ENCODE measurements at regions of chr1 and their contacts with region 1.

Region 1: GRCh38 chr1:64242895-64243756 is 39.7 kb downstream of the UBE2U start:
- DNase-seq: peak; percentile 72
- ATAC-seq: peak; percentile 57; the same call in 1 of the 2 replicates
- H3K4me3 ChIP-seq: no peak overlapping the region
- H3K27ac ChIP-seq: no peak overlapping the region
- H3K4me1 ChIP-seq: peaks cover 28% of the 10 kb centered on the region
- H3K27me3 ChIP-seq: no peaks in the 10 kb centered on the region
- CTCF ChIP-seq: peak; percentile 81

Region 2: DNA sequence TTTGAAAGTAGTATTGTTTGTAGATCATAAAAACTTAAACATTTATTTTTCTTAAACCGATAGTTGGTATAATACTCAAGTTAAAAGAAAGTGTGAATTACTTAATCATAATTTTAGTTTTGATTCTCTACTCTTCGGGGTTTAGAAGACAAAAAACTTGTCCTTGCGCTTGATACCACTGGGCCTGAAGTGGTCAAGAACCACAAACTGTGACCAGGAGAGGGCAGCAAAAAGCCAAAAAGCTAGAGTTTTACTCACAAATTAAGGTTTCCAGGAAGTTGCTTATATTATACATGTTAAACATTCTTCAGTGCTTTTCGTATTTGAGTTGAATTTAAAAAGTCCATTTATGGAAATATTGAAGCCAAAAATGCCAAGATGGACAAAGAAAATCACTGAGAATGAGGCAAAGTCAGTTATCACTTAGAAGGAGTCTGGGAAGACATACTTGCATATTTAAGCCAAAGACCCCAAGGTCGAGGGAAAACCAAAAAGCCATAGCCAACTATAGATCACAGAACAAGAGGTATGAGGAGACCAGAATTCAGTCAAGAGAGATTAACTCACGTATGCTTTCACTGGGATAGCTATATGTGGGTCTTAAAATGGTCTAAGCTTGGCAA is 685.6 kb before region 1 on chr1:
- CTCF ChIA-PET with region 1: interaction called, 4 read pairs
- POLR2A ChIA-PET with region 1: no interaction called
- intact Hi-C with region 1: loop called (anchors 1 kb)
- DNase-seq: peak; percentile 75
- ATAC-seq: peak; percentile 73
- H3K4me3 ChIP-seq: no peak overlapping the region
- H3K27ac ChIP-seq: no peak overlapping the region
- H3K4me1 ChIP-seq: no peaks in the 10 kb centered on the region
- H3K27me3 ChIP-seq: no peaks in the 10 kb centered on the region
- CTCF ChIP-seq: peak; percentile 87

Region 3: DNA sequence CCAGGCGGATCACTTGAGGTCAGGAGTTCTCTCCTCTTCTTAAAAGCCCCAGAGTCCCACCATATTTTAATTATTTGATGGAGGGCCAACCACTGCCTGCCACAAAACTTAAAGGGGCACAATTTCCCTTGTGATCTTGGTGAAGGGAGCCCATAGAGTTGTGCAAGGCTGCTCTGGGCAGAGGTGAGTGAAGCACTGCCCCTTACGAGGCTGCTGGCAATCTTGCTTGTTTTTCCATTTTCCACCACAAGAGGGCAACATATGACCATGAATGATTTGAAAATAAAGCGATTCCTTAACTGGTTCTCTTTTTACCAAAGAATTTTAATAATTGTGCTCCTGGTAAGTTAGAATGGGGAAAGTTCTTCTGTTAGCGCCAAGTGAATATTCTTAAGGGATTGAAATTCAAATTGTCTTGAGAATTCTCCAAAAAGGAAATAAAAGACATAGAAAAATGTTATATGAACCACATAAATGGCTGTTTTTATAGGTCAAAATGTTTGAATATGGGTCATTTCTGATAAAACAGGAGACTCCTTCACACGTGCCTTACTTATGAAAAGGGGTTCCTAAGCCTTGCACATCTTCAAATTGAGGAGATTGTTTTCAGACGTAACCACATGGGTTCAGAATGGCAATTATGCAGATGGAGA is 627.2 kb before region 1 on chr1:
- CTCF ChIA-PET with region 1: interaction called, 3 read pairs
- POLR2A ChIA-PET with region 1: no interaction called
- intact Hi-C with region 1: loop called (anchors 1 kb)
- DNase-seq: peak; percentile 94
- ATAC-seq: peak; percentile 76
- H3K4me3 ChIP-seq: no peak overlapping the region
- H3K27ac ChIP-seq: no peak overlapping the region
- H3K4me1 ChIP-seq: peaks cover 7% of the 10 kb centered on the region; the same call in 1 of the 2 replicates
- H3K27me3 ChIP-seq: no peaks in the 10 kb centered on the region
- CTCF ChIP-seq: peak; percentile 88

Region 4: DNA sequence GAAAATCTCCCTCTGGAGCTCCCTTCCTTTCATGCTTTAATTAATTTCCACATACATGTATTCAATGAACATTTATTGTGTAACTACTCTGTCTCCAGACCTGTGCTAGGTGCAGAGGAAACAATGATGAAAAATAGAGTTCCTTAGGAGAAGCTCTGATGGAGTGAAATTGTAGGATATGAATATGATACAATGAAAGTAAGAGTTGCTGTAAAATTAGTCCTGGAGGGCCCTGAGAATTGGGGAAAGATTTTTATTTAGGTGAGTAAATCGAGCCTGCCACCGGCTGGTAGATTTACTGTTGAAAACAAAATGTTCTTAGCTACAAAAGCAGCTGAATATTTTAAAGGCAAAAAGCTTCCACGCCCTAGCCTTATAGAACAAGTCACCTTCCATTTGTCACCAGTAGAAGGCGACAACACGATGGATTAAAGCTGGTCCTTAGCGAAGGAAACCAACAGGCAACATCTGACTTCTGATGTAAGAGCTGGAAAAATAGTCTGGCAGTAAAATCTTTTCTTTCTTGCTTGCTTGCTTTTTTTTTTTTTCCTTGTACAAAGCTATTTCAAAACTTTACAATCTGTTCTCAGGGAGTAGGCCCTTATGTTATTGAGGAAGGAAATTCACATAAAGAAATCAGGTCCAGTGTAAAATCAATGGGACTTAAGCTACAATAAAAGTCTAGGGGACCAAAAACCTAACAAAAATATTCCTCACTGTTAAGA is 551.3 kb before region 1 on chr1:
- CTCF ChIA-PET with region 1: interaction called, 15 read pairs
- POLR2A ChIA-PET with region 1: no interaction called
- intact Hi-C with region 1: loop called (anchors 1 kb)
- DNase-seq: peak; percentile 92
- ATAC-seq: peak; percentile 91
- H3K4me3 ChIP-seq: no peak overlapping the region
- H3K27ac ChIP-seq: peak overlapping the region; percentile 60
- H3K4me1 ChIP-seq: peaks cover 10% of the 10 kb centered on the region
- H3K27me3 ChIP-seq: no peaks in the 10 kb centered on the region
- CTCF ChIP-seq: peak; percentile 88

Region 5: GRCh38 chr1:63917571-63918417 is 325.3 kb before region 1 on chr1:
- CTCF ChIA-PET with region 1: no interaction called
- POLR2A ChIA-PET with region 1: no interaction called
- intact Hi-C with region 1: loop called (anchors 5 kb)
- DNase-seq: peak; percentile 29
- ATAC-seq: no peak
- H3K4me3 ChIP-seq: no peak overlapping the region
- H3K27ac ChIP-seq: no peak overlapping the region
- H3K4me1 ChIP-seq: peaks cover 25% of the 10 kb centered on the region
- H3K27me3 ChIP-seq: no peaks in the 10 kb centered on the region
- CTCF ChIP-seq: peak; percentile 53

Region 6: GRCh38 chr1:64136752-64137411 is 106.2 kb before region 1 on chr1:
- CTCF ChIA-PET with region 1: interaction called, 6 read pairs
- POLR2A ChIA-PET with region 1: no interaction called
- intact Hi-C with region 1: loop called (anchors 1 kb)
- DNase-seq: peak; percentile 93
- ATAC-seq: peak; percentile 51
- H3K4me3 ChIP-seq: no peak overlapping the region
- H3K27ac ChIP-seq: no peak overlapping the region
- H3K4me1 ChIP-seq: peaks cover 42% of the 10 kb centered on the region
- H3K27me3 ChIP-seq: no peaks in the 10 kb centered on the region
- CTCF ChIP-seq: peak; percentile 95

Region 7: DNA sequence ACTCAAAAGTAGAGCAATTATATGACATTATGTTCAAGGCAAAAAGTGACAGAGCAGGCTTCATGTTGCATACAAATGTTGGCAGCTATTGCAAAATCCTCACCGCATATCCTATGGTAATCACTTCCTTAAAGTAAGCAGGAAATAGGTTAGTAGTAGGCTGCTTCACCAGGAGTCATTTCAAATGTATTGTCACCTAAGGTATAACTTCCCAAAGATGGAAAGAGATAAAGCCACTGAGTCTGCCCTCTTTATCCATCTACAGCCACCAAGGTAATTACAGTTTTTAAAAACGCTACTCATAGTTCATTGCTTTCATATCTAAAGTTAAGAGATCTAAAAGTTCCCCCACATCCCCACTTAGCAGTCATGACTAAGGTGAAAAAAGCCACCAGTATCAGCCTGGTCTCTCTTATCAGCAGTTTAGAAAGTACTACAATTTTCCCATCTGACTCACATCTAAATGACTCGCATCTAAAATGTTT is 71.3 kb before region 1 on chr1:
- CTCF ChIA-PET with region 1: no interaction called
- POLR2A ChIA-PET with region 1: no interaction called
- intact Hi-C with region 1: loop called (anchors 1 kb)
- DNase-seq: peak; percentile 85
- ATAC-seq: peak; percentile 69
- H3K4me3 ChIP-seq: peak overlapping the region; percentile 34; the same call in 1 of the 2 replicates
- H3K27ac ChIP-seq: peak overlapping the region; percentile 92
- H3K4me1 ChIP-seq: peaks cover 31% of the 10 kb centered on the region
- H3K27me3 ChIP-seq: no peaks in the 10 kb centered on the region
- CTCF ChIP-seq: no peak

Region 8: GRCh38 chr1:64223329-64224151 is 19.6 kb before region 1 on chr1:
- CTCF ChIA-PET with region 1: no interaction called
- POLR2A ChIA-PET with region 1: no interaction called
- intact Hi-C with region 1: no loop called
- DNase-seq: peak; percentile 87
- ATAC-seq: peak; percentile 76
- H3K4me3 ChIP-seq: peak overlapping the region; percentile 9; the same call in 1 of the 2 replicates
- H3K27ac ChIP-seq: peak overlapping the region; percentile 84
- H3K4me1 ChIP-seq: peaks cover 18% of the 10 kb centered on the region
- H3K27me3 ChIP-seq: no peaks in the 10 kb centered on the region
- CTCF ChIP-seq: no peak

Region 9: DNA sequence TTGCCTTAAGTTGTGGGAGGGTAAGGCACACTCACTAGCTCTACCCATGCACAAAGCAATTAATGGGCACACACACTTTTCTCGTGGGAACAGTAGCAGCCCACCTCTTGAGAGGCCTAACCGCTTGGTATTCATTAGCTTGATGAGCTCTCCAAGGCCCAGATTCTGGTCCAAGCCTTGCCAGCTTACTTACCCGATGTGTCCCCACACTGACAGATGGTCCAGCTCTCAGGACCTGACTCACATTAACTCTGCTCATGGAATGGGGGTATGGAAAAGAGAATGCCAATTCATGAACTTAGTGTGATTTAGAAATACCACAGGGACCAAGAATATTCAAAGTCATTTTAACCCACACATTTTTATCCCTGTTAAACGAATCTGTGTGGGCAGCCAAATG is 120.0 kb after region 1 on chr1:
- CTCF ChIA-PET with region 1: no interaction called
- POLR2A ChIA-PET with region 1: no interaction called
- intact Hi-C with region 1: no loop called
- DNase-seq: no peak
- ATAC-seq: no peak
- H3K4me3 ChIP-seq: no peak overlapping the region
- H3K27ac ChIP-seq: no peak overlapping the region
- H3K4me1 ChIP-seq: no peaks in the 10 kb centered on the region
- H3K27me3 ChIP-seq: no peaks in the 10 kb centered on the region
- CTCF ChIP-seq: no peak

Measured in PC-3 (cell line).